ENCODE measurements at regions of chr12 and their contacts with region 1.

Region 1: GRCh38 chr12:106136263-106136662 is 2.5 kb downstream of the NUAK1 start:
- DNase-seq: peak; percentile 80 to 96 (median 88)
- H3K4me3 ChIP-seq: peak overlapping the region in 1 of 4 donors; percentile 89
- H3K27ac ChIP-seq: peak overlapping the region in 1 of 5 donors; percentile 83
- H3K4me1 ChIP-seq: peaks cover 15 to 62% of the 10 kb centered on the region in 2 donors
- H3K27me3 ChIP-seq: no peaks in the 10 kb centered on the region
- CTCF ChIP-seq: peak; percentile 75 to 96 (median 90)
- POLR2A ChIP-seq: no peak

Region 2: DNA sequence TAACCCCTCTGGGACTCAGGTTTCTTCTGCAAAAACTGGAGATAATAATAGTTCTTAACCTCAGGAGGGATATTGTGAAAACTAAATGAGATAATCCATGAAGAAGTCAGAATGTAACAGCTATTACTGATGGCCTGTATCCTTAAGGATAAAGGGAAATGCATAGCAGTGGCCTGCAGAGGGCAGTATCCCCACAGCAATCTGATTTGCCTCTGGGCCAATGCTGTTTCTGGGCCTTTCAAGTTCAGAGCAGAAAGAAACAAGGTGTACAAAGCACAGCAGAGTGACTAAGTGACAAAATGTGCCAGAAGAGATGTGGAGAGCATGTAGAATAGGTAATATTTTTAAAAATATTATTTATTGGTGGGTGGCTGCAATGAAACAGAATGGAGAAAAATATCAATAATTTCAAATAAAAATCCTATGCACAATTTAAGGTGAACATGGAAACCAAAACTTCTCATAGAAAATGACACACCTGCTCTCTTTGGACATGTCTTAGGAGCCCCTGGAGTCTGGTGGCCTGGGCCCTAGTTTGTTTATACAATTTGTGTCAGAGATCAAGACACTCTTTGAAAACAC is 715.5 kb before region 1 on chr12:
- intact Hi-C with region 1: loop called in 1 of 2 experiments (anchors 5 kb)
- DNase-seq: peak; percentile 57 to 92 (median 75)
- H3K4me3 ChIP-seq: no peak overlapping the region
- H3K27ac ChIP-seq: no peak overlapping the region
- H3K4me1 ChIP-seq: no peaks in the 10 kb centered on the region
- H3K27me3 ChIP-seq: no peaks in the 10 kb centered on the region
- CTCF ChIP-seq: peak; percentile 87 to 97 (median 94)
- POLR2A ChIP-seq: no peak

Region 3: GRCh38 chr12:105705765-105706164 is 430.5 kb before region 1 on chr12:
- intact Hi-C with region 1: loop called (anchors 5 to 10 kb)
- DNase-seq: peak; percentile 43 to 78 (median 59)
- H3K4me3 ChIP-seq: no peak overlapping the region
- H3K27ac ChIP-seq: peak overlapping the region in 2 of 5 donors; percentile 0 to 36
- H3K4me1 ChIP-seq: peaks cover 0 to 8% of the 10 kb centered on the region in 2 donors
- H3K27me3 ChIP-seq: no peaks in the 10 kb centered on the region
- CTCF ChIP-seq: peak; percentile 57 to 83 (median 75)
- POLR2A ChIP-seq: no peak

Region 4: DNA sequence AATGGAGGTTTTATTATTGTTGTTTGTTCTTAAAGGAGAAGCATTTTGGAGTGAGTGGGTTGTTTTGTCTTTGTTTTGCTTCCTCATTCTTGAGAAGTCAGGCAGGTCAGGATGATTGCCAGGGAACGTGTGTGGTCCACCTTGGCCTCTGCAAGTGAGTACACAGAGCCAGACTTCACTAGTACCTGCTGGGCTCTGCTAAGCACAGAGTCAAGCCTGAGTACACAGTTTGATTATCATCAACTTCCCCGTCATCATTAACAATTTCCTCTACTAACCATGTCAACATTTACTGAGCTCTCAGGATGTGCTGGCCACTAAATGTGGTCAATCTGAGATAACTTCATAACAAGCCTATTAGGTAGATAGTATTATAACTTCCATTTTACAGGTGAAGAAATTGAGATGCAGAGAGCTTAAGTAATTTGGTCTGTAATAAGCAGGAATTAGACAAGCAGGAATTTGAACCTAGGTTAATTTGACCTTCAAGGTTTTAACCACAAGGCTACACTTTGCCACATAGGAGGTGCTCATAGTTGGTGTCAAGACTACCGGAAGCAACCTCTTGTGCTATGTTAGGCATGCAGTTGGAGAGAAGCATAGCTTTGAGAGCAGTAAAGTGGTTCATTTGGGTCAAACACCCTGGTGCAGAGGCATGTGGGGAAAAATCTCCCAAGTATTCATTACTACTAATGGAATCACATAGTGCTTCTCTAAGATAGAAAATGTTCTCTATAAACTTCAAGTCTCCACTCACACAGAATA is 175.8 kb before region 1 on chr12:
- intact Hi-C with region 1: no loop called
- DNase-seq: no peak
- H3K4me3 ChIP-seq: no peak overlapping the region
- H3K27ac ChIP-seq: no peak overlapping the region
- H3K4me1 ChIP-seq: no peaks in the 10 kb centered on the region
- H3K27me3 ChIP-seq: peaks cover 3% of the 10 kb centered on the region
- CTCF ChIP-seq: no peak
- POLR2A ChIP-seq: no peak

Region 5: DNA sequence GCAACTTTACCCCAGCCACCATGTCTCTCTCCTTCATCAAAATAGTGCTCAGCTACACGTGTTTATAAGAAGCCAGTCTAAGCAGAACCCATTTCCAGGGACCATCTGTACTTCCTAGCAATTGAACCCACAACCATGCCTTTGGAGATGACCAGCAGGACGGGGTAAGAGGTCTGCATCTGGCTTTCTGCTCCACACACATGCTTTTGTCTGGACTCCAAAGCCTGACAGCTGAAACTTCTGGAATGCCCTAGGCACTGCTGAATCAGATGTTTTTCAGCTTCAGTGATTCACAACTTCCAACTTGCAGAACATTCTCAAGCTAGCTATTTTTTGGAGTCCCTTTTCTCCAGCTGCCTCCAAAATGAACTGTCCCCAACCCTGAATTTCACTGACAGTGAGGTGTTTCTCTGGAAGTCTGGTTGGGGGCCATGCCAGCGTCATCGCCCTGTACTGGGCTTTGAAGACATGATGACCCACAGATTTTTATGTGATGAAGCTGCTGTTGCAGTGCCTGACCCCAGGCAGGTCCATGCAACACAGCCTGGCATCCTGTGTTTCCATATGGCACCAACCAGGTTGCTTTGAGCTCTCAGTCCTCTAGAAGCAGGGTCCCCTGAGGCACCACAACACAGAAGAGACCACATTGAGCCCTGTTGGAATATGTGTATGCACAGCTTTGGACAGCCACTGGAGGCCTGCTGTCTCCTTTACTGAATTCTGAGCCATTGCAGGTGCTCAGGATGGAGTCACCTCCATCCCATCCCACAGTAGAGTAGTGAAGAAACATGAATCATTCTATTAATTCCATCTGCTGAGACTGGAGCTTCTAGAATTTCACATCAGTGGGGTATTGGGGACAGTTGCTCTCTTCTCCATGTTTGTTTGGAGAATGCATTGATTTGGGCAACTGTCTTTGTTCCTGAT is 77.7 kb before region 1 on chr12:
- intact Hi-C with region 1: no loop called
- DNase-seq: no peak
- H3K4me3 ChIP-seq: no peak overlapping the region
- H3K27ac ChIP-seq: no peak overlapping the region
- H3K4me1 ChIP-seq: no peaks in the 10 kb centered on the region
- H3K27me3 ChIP-seq: no peaks in the 10 kb centered on the region
- CTCF ChIP-seq: no peak
- POLR2A ChIP-seq: no peak

Region 6: DNA sequence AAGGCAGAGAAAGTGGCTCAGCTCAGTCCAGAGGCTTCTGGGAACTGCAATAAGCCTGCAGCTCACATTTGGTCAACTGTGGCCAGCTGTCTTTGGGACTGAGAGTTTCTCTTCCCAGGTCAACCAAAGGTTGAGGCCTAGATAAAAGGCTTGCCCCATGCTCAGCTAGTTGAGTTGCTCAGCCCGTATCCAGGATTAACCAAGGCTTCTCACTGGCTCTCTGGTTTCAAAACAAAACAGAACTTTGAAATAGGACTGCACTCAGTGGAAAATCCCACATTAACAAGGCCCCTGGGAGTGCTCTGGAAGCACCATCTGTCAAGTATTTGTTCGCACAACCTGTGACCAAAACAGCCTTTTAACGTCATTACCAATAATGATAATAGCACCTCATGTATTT is 42.8 kb after region 1 on chr12:
- intact Hi-C with region 1: no loop called
- DNase-seq: peak in 2 of 7 donors; percentile 24 to 55
- H3K4me3 ChIP-seq: no peak overlapping the region
- H3K27ac ChIP-seq: peak overlapping the region in 2 of 5 donors; percentile 42 to 60
- H3K4me1 ChIP-seq: peaks cover 0 to 6% of the 10 kb centered on the region in 2 donors
- H3K27me3 ChIP-seq: no peaks in the 10 kb centered on the region
- CTCF ChIP-seq: no peak
- POLR2A ChIP-seq: no peak

Region 7: GRCh38 chr12:106205208-106206071 is 69.2 kb after region 1 on chr12:
- intact Hi-C with region 1: loop called in 1 of 2 experiments (anchors 10 kb)
- DNase-seq: peak; percentile 40 to 78 (median 73)
- H3K4me3 ChIP-seq: no peak overlapping the region
- H3K27ac ChIP-seq: no peak overlapping the region
- H3K4me1 ChIP-seq: no peaks in the 10 kb centered on the region
- H3K27me3 ChIP-seq: no peaks in the 10 kb centered on the region
- CTCF ChIP-seq: peak in 4 of 6 experiments; percentile 42 to 60 (median 54)
- POLR2A ChIP-seq: no peak

Measured in adrenal gland (tissue), 19 donors.